ENCODE measurements at regions of chr16 and their contacts with region 1.

Region 1: GRCh38 chr16:85935974-85936760 is 37.2 kb downstream of the IRF8 start:
- DNase-seq: peak; percentile 88
- H3K4me3 Mint-ChIP-seq: peak overlapping the region; percentile 42
- H3K27ac Mint-ChIP-seq: peak overlapping the region; percentile 95
- H3K4me1 Mint-ChIP-seq: peaks cover 48% of the 10 kb centered on the region
- H3K27me3 Mint-ChIP-seq: peaks cover 7% of the 10 kb centered on the region

Region 2: GRCh38 chr16:85688586-85689284 is 247.4 kb before region 1 on chr16 and contains the start of gene GINS2:
- CTCF ChIA-PET with region 1: no interaction called
- POLR2A ChIA-PET with region 1: no interaction called
- intact Hi-C with region 1: loop called (anchors 2 kb)
- DNase-seq: peak; percentile 95
- H3K4me3 Mint-ChIP-seq: peak within 1 kb of the TSS; percentile 88
- H3K27ac Mint-ChIP-seq: peak within 1 kb of the TSS; percentile 67
- H3K4me1 Mint-ChIP-seq: peaks cover 15% of the 10 kb centered on the region
- H3K27me3 Mint-ChIP-seq: no peaks in the 10 kb centered on the region
- total RNA-seq, gene GINS2: 66.9 to 67.8 TPM

Region 3: DNA sequence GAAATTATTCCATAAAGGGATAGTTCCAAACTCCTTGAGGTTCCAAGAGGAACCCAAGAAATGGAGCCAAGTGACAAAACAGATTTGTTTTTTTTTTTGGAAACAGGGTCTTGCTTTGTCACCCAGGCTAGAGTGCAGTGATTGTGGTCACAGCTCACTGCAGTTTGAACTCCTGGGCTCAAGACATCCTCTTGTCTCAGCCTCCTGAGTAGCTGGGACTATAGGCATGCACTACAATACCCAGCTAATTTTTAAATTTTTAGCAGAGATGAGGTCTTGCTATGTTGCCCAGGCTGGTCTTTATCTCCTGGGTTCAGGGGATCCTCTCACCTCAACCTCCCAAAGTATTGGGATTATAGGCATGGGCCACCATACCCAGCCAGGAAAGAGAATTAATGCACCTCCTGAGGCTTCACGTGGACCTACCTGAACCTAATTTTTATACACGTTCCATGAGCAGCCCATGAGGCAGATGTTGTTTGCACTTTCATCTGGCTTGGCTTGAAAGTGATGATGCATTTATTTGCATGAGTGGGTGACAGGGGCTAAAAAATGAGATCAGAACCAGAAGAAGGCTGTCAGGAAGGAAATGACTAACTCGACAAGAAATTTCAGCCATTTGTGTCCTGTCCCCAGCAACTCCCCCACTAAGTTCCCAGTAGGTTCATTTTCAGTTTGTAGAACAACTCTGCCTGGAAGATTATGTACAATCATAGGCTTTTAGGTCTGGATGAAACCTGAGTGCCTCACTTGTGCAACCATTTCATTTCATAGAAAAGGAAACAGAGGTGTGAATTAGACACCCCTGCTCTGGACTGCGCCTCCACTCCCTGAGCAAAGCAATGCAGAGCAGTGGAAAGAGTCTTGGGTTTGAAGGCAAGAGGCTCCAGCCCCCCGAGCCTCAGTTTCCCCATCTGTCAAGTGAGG is 47.5 kb before region 1 on chr16:
- CTCF ChIA-PET with region 1: interaction called, 4 read pairs
- POLR2A ChIA-PET with region 1: no interaction called
- intact Hi-C with region 1: loop called (anchors 1 kb)
- DNase-seq: peak; percentile 57
- H3K4me3 Mint-ChIP-seq: no peak overlapping the region
- H3K27ac Mint-ChIP-seq: peak overlapping the region; percentile 52
- H3K4me1 Mint-ChIP-seq: peaks cover 27% of the 10 kb centered on the region
- H3K27me3 Mint-ChIP-seq: peaks cover 29% of the 10 kb centered on the region

Region 4: GRCh38 chr16:85898521-85899442 is 37.4 kb before region 1 on chr16 and contains the start of gene IRF8:
- CTCF ChIA-PET with region 1: no interaction called
- POLR2A ChIA-PET with region 1: interaction called, 3 read pairs
- intact Hi-C with region 1: loop called (anchors 1 kb)
- DNase-seq: peak; percentile 80
- H3K4me3 Mint-ChIP-seq: peak within 1 kb of the TSS; percentile 82
- H3K27ac Mint-ChIP-seq: peak within 1 kb of the TSS; percentile 76
- H3K4me1 Mint-ChIP-seq: peaks cover 40% of the 10 kb centered on the region
- H3K27me3 Mint-ChIP-seq: peaks cover 28% of the 10 kb centered on the region
- total RNA-seq, gene IRF8: 41.7 to 43.1 TPM

Region 5: GRCh38 chr16:85923153-85924021 is 12.8 kb before region 1 on chr16:
- CTCF ChIA-PET with region 1: interaction called, 5 read pairs
- POLR2A ChIA-PET with region 1: no interaction called
- intact Hi-C with region 1: loop called (anchors 1 kb)
- DNase-seq: no peak
- H3K4me3 Mint-ChIP-seq: no peak overlapping the region
- H3K27ac Mint-ChIP-seq: no peak overlapping the region
- H3K4me1 Mint-ChIP-seq: peaks cover 21% of the 10 kb centered on the region
- H3K27me3 Mint-ChIP-seq: peaks cover 6% of the 10 kb centered on the region

Region 6: DNA sequence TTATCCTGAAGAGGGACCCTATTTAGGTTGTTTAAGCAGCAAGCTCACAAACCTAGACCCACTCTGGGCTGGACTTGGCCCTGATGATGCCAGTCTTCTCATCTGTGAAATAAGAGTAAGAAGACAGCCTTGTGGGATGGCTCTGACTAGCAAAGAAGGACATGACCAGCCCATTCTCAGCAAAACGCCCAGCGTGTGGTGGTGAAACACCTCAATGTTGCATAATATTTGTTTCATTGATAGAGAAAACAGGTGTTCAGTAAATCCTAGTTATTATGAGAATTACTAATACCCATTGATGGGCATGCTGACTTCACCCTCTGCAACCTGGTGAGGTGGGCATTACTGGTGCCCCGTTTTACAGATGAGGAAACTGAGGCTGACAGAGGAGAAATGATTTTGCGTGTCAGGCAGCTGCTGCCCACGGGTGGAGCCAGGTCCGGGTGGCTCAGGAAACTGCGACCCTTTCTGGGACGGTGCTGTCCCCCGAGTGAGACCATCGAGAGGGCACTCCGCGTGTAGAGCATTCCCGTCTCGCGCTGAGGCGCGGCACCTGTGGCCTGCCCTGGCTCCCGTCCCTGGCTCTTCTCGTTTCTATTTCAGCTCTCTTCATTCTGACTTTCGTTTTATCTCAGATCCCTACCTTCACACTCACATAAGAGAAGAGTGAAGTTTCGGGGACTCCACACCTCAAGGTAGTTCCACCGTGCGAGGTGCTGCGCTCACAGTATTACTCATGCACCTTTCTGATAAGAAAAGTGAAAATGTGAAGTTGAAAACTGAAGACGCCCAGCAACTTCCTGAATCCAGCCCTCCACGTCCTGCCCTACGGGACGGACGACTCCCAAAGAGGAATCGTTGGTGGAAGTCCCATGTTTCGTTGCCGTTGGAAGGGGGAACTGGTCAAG is 11.3 kb after region 1 on chr16:
- CTCF ChIA-PET with region 1: no interaction called
- POLR2A ChIA-PET with region 1: interaction called, 7 read pairs
- intact Hi-C with region 1: loop called (anchors 1 kb)
- DNase-seq: peak; percentile 77
- H3K4me3 Mint-ChIP-seq: peak overlapping the region; percentile 45
- H3K27ac Mint-ChIP-seq: peak overlapping the region; percentile 54
- H3K4me1 Mint-ChIP-seq: peaks cover 49% of the 10 kb centered on the region
- H3K27me3 Mint-ChIP-seq: peaks cover 32% of the 10 kb centered on the region

Measured in activated CD4-positive, alpha-beta memory T cell treated with anti-CD3 and anti-CD28 coated beads for 36 hours (primary cell).